ENCODE measurements at regions of chr22 and their contacts with region 1.

Region 1: GRCh38 chr22:31122532-31123291 is at the start of gene INPP5J:
- DNase-seq: peak; percentile 34 to 48
- H3K4me3 ChIP-seq: peak within 1 kb of the TSS; percentile 57
- H3K27ac ChIP-seq: no peak within 1 kb of the TSS
- H3K4me1 ChIP-seq: peaks cover 6% of the 10 kb centered on the region; the same call in 1 of the 2 replicates
- H3K27me3 ChIP-seq: peaks cover 16% of the 10 kb centered on the region; the same call in 1 of the 2 replicates
- CTCF ChIP-seq: no peak
- total RNA-seq, gene INPP5J: 1.7 and 3.1 TPM in 2 replicates

Region 2: DNA sequence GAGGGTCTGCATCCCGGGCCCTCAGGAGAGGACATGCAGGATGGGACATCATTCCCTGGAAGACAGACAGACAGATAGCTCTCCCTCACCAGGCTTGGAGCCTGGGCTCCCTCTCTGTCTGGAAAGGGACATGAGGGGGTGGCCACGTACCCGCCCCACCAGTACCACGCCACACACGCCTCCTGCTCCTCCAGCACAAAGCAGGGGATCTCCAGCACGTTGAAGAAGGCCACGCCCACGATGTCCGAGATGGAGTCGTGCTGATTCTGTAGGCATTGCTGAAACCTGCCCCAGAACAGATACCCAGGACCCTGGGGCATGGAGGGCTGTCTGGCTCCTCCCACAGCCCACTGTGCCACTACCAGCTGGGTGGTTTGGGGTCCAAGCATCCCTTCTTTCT is 15.4 kb after region 1 on chr22:
- CTCF ChIA-PET with region 1: no interaction called
- POLR2A ChIA-PET with region 1: interaction called, 10 read pairs
- intact Hi-C with region 1: no loop called
- DNase-seq: no peak
- H3K4me3 ChIP-seq: no peak overlapping the region
- H3K27ac ChIP-seq: no peak overlapping the region
- H3K4me1 ChIP-seq: no peaks in the 10 kb centered on the region
- H3K27me3 ChIP-seq: peaks cover 6% of the 10 kb centered on the region
- CTCF ChIP-seq: no peak

Region 3: DNA sequence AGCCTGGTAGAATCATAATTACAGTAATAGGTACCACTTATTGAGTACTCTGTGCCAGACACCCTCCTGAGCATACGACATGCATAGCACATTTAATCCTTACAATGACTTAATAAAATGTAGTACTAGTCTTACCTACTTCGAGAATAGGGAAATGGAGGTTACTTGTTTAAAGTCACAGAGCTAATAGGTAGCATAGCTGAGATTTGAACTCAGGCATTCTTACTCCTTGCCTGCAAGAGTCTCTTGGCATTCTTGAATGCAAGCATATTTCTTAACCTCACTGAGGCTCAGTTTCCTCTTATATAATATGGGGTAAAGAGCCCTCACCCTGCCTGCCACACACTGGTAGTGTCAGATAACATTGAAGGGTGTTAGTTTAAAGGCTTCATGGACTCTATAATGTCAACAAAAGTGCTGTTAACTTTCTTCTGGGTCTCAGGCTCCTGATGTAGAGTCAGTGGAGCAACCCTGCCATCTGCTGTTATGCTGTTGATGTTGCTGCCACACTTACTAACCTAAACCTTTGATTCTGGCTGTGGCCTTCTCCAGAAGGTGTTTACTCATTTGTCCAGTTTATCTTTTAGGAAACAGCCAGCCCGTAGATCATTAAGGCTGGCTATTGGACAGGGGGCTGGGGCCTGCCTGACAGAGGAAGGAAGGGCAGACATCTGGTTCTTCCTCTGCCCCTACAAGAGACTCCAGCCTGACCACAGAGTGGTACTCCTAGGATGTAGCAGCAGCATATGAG is 108.3 kb after region 1 on chr22:
- CTCF ChIA-PET with region 1: no interaction called
- POLR2A ChIA-PET with region 1: no interaction called
- intact Hi-C with region 1: no loop called
- DNase-seq: peak; percentile 30 to 68
- H3K4me3 ChIP-seq: no peak overlapping the region
- H3K27ac ChIP-seq: no peak overlapping the region
- H3K4me1 ChIP-seq: peaks cover 17% of the 10 kb centered on the region
- H3K27me3 ChIP-seq: no peaks in the 10 kb centered on the region
- CTCF ChIP-seq: peak; percentile 83

Measured in PC-9 (cell line).